ENCODE measurements at regions of chr11 and their contacts with region 1.

Region 1: DNA sequence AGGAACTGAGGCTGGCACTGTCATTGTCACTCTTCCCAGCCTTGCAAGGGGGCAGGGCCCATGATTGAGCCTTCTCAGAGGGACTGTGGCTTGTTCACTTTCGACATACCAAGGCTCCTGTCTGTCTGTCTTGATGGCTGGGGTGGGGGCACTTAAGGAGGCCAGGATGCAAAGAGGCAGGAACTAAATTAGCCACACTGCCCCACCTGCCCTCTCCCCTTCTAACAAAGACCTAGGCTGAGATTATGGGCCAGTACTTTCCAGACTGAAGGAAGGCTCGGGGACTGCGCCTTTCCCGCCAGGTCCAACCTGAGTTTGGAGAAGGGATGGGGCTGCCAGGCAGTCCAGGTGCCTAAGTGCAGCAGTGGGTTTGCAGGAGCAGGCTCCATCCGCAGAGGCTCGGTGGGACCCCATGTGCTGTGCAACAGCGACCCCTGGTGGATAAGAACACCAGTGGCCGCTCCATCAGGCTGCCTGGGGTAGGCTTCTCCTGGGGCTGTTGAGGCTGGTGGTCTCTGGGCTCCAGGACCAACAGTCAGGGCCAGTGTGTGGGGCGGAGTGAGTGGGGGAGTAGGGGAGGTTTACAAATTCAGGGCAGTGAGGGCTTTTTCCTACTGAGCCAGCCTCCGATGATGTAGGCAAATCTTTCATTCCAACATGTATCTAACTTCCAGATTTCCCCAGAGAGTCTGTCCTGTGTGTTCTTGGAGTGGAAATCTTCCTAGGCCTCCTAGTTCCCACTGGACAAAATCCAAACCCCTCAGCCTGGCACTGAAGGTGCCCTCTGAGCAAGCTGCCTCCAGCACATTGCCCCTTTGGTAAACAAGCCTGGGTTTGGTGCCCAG is 93.9 kb downstream of the INSC start:
- DNase-seq: peak in 1 of 2 experiments; percentile 41
- H3K4me3 ChIP-seq: no peak overlapping the region
- H3K27ac ChIP-seq: no peak overlapping the region
- H3K4me1 ChIP-seq: no peaks in the 10 kb centered on the region
- H3K27me3 ChIP-seq: no peaks in the 10 kb centered on the region
- CTCF ChIP-seq: peak; percentile 84

Region 2: DNA sequence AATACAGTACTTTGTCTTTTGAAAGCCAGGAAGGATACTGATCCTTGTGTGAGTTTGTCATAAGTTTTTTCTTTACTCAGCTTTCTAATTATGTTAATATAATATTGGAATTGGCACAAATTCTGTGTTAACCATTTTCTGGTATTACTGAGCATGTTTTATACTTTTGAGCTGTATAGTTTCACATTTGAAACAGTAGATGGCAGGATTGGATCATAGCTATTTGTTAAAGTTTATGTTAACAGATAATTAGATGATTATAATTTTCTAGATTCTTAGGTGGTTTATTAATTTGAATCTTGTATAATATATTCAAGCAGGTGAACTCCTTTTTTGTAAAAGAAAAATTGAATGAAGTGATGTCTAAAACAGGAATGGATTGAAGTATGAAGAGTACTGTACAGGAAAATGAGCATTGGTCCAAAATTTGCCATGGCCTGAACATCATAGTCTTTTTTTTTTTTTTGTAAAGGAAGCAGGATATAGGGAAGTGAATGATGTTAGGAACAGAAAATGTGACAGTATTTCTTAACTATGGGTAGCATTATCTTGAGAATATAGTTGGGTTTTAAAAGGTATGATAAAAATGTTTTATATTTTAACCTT is 418.6 kb before region 1 on chr11:
- CTCF ChIA-PET with region 1: no interaction called
- POLR2A ChIA-PET with region 1: no interaction called
- intact Hi-C with region 1: loop called (anchors 10 kb)
- DNase-seq: no peak
- H3K4me3 ChIP-seq: no peak overlapping the region
- H3K27ac ChIP-seq: no peak overlapping the region
- H3K4me1 ChIP-seq: no peaks in the 10 kb centered on the region
- H3K27me3 ChIP-seq: no peaks in the 10 kb centered on the region
- CTCF ChIP-seq: peak; percentile 67

Region 3: DNA sequence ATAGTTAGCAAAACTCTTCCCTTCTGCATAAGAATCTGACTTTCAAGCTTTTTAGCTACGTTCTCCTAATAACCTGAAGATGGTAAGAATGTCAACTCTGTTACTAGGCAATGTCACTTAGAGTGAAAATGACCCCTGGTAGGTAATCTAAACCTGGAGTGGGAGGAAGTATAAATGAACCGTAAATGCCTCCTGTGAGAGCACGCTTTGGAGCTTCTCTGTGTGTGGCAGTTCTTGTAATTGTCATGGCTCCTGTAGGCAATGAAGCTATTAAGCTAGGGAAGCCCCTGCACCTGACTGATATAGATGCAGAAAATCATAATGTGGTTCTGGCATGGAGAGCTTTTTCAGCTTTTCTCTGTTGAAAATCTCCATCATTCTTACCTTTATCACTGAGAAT is 265.9 kb before region 1 on chr11:
- CTCF ChIA-PET with region 1: no interaction called
- POLR2A ChIA-PET with region 1: no interaction called
- intact Hi-C with region 1: no loop called
- DNase-seq: no peak
- H3K4me3 ChIP-seq: no peak overlapping the region
- H3K27ac ChIP-seq: no peak overlapping the region
- H3K4me1 ChIP-seq: no peaks in the 10 kb centered on the region
- H3K27me3 ChIP-seq: no peaks in the 10 kb centered on the region
- CTCF ChIP-seq: no peak

Measured in PC-9 (cell line).